ENCODE measurements at regions of chr6 and their contacts with region 1.

Region 1: DNA sequence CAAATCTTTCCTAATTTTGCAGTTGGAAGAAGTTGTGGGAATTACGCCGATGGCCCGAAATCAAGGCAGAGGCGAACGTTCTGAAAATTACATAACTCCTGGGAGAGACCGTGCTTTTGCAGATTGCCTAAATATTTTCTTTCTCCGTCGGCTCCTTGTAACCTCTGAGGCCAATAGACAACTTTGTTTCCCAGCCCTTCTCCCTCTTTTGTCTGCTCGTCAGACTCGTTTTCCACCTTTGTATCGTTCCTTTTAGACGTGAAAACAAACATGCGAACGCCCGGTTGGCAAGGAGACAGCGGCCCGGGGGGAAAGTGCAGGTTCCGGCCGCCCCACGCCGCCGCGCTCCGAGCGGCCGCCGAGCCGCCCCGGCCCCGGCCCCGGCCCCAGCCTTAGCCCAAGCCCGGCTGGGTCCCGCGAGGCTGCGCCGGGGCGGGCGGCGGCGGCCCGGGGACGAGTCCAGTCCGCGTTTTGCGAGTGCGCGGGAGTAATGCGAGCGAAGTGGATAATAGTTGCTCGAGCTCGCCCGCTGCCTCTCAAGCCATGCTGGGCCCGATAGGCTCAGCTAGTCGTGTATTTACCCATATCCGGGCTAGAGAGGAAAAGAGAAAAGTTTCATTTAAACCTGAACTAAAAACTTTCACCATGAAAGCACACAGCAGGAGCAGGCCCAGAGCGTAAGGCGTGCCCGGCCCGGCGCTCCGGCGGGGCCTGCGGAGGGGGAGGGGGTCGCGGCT is at the start of gene ARID1B:
- DNase-seq: peak; percentile 83
- ATAC-seq: peak; percentile 57
- H3K4me3 ChIP-seq: peak within 1 kb of the TSS; percentile 99
- H3K27ac ChIP-seq: peak within 1 kb of the TSS; percentile 100
- H3K4me1 ChIP-seq: peaks cover 6% of the 10 kb centered on the region
- H3K27me3 ChIP-seq: no peaks in the 10 kb centered on the region
- CTCF ChIP-seq: no peak
- POLR2A ChIP-seq: peak; percentile 78
- RAD21 ChIP-seq: peak; percentile 29
- total RNA-seq, gene ARID1B: 14.5 and 22.8 TPM in 2 replicates

Region 2: GRCh38 chr6:155782320-155782731 is 994.7 kb before region 1 on chr6:
- CTCF ChIA-PET with region 1: no interaction called
- POLR2A ChIA-PET with region 1: interaction called, 3 read pairs
- dilution Hi-C with region 1: no loop called
- in situ Hi-C with region 1: no loop called
- intact Hi-C with region 1: loop called (anchors 5 kb)
- DNase-seq: peak; percentile 99
- ATAC-seq: peak; percentile 85
- H3K4me3 ChIP-seq: no peak overlapping the region
- H3K27ac ChIP-seq: peak overlapping the region; percentile 88
- H3K4me1 ChIP-seq: peaks cover 18% of the 10 kb centered on the region
- H3K27me3 ChIP-seq: no peaks in the 10 kb centered on the region
- CTCF ChIP-seq: no peak
- POLR2A ChIP-seq: peak; percentile 75
- RAD21 ChIP-seq: peak; percentile 18; the same call in 1 of the 2 replicates

Region 3: GRCh38 chr6:156564127-156564806 is 212.7 kb before region 1 on chr6:
- CTCF ChIA-PET with region 1: no interaction called
- POLR2A ChIA-PET with region 1: no interaction called
- dilution Hi-C with region 1: no loop called
- in situ Hi-C with region 1: loop called (anchors 25 kb)
- intact Hi-C with region 1: loop called (anchors 1 kb)
- DNase-seq: peak; percentile 53
- ATAC-seq: peak; percentile 99
- H3K4me3 ChIP-seq: no peak overlapping the region
- H3K27ac ChIP-seq: no peak overlapping the region
- H3K4me1 ChIP-seq: no peaks in the 10 kb centered on the region
- H3K27me3 ChIP-seq: peaks cover 5% of the 10 kb centered on the region
- CTCF ChIP-seq: peak; percentile 88
- POLR2A ChIP-seq: no peak
- RAD21 ChIP-seq: peak; percentile 89

Region 4: DNA sequence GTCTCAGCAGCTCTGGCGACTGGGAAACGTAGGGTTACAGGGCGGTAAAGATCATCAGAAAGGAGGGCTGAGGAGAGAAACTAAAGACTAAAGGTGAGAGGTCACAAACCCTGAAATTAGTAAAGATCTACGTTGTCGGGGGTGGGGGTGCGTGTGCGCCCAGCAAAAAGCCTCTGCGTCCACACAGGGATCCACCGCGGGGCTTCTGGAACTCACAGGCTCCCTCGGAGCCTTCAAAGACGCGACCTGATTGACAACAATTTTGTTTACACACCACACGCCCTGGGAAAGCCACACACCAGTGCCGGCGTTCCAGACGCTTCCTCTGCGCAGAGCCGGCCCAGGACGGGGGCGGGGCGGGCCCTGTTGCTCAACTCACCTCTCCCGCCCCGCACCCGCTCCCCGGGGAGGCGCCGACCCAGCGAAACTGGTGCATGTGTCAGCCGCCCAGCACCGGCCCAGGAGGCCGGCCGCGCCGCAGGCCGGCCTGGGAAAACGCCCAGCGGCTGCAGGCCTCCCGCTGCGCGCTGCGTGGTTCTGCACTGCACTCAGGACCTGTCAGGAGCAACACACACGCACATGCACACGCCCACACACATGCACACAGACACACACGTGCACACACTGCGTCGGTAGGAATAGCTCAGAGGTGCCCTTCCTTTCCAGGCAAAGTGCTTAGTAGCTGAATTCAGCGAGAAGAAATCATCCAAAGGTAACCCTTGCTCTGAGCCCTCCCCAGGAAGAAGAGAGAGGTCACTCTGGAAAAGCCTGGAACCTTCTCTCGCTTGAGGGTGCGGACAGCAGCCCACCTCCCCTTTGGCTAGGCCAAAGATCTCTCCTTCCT is 57.1 kb before region 1 on chr6:
- CTCF ChIA-PET with region 1: no interaction called
- POLR2A ChIA-PET with region 1: no interaction called
- dilution Hi-C with region 1: no loop called
- in situ Hi-C with region 1: no loop called
- intact Hi-C with region 1: loop called (anchors 5 kb)
- DNase-seq: peak; percentile 87
- ATAC-seq: peak; percentile 100
- H3K4me3 ChIP-seq: peak overlapping the region; percentile 11; the same call in 1 of the 2 replicates
- H3K27ac ChIP-seq: no peak overlapping the region
- H3K4me1 ChIP-seq: peaks cover 8% of the 10 kb centered on the region
- H3K27me3 ChIP-seq: no peaks in the 10 kb centered on the region; the same call in 1 of the 2 replicates
- CTCF ChIP-seq: no peak
- POLR2A ChIP-seq: no peak
- RAD21 ChIP-seq: no peak

Region 5: DNA sequence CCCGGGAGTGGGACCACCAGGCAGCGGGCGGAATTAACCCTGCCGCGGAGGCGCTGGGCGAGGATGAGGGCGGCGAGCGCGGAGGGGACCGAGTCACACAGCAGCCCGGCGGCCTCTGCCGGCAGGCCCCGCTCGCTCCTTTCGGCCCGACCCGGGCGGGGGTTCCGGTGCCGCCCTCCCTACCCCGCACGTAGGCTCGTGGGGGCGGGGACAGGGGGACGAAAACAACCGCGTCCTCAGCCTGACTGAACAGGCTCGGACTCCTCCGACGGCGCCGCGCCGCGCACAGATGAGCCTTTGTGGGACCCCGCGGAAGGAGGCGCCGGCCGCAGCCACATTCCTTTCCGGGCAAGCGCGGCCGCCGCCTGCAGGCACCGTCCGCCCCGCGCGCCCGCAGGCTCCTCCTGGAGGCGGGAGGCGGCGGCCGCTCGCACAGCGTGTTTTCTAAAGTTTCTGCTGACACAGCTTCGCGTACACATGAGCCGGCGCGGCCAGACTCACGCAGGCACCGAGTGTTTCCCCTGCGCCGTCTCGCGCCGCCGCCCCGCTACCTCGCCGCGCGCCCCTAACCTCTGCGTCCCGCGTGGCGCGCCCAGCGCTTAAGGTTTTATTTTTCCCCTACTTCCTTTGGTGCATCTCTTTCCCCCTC is 244.5 kb after region 1 on chr6:
- CTCF ChIA-PET with region 1: no interaction called
- POLR2A ChIA-PET with region 1: interaction called, 4 read pairs
- dilution Hi-C with region 1: no loop called
- in situ Hi-C with region 1: loop called (anchors 10 kb)
- intact Hi-C with region 1: loop called (anchors 1 kb)
- DNase-seq: peak; percentile 81
- ATAC-seq: peak; percentile 78
- H3K4me3 ChIP-seq: peak overlapping the region; percentile 64
- H3K27ac ChIP-seq: peak overlapping the region; percentile 98
- H3K4me1 ChIP-seq: peaks cover 12% of the 10 kb centered on the region
- H3K27me3 ChIP-seq: no peaks in the 10 kb centered on the region
- CTCF ChIP-seq: peak; percentile 52
- POLR2A ChIP-seq: peak; percentile 95
- RAD21 ChIP-seq: peak; percentile 25; the same call in 1 of the 2 replicates

Measured in IMR-90 (cell line).